ENCODE measurements at regions of chr12 and their contacts with region 1.

Region 1: GRCh38 chr12:6062757-6063735 is 61.4 kb downstream of the VWF start:
- DNase-seq: peak; percentile 59 to 77
- ATAC-seq: peak; percentile 71 to 90
- H3K4me3 ChIP-seq: no peak overlapping the region
- H3K27ac ChIP-seq: no peak overlapping the region
- H3K4me1 ChIP-seq: no peaks in the 10 kb centered on the region
- CTCF ChIP-seq: peak; percentile 84
- EP300 ChIP-seq: no peak
- POLR2A ChIP-seq: no peak
- RAD21 ChIP-seq: peak; percentile 91 to 96

Region 2: GRCh38 chr12:5047094-5047493 is 1016.0 kb before region 1 on chr12:
- CTCF ChIA-PET with region 1: no interaction called
- POLR2A ChIA-PET with region 1: no interaction called
- DNase-seq: no peak
- ATAC-seq: no peak
- H3K4me3 ChIP-seq: no peak overlapping the region
- H3K27ac ChIP-seq: no peak overlapping the region
- H3K4me1 ChIP-seq: no peaks in the 10 kb centered on the region
- CTCF ChIP-seq: no peak
- EP300 ChIP-seq: no peak
- POLR2A ChIP-seq: no peak
- RAD21 ChIP-seq: no peak

Region 3: GRCh38 chr12:6092784-6093722 is 30.0 kb after region 1 on chr12:
- CTCF ChIA-PET with region 1: interaction called, 11 read pairs
- POLR2A ChIA-PET with region 1: no interaction called
- DNase-seq: peak; percentile 85
- ATAC-seq: peak; percentile 96 to 97
- H3K4me3 ChIP-seq: peak overlapping the region; percentile 25; the same call in 2 of the 3 replicates
- H3K27ac ChIP-seq: peak overlapping the region; percentile 65 to 82
- H3K4me1 ChIP-seq: peaks cover 26% of the 10 kb centered on the region
- CTCF ChIP-seq: no peak
- EP300 ChIP-seq: no peak
- POLR2A ChIP-seq: 0 out of 2 replicates have a peak, but pooled peaks have one; percentile 16
- RAD21 ChIP-seq: no peak; a peak in 1 of 5 replicates

Region 4: GRCh38 chr12:6236641-6236940 is 173.5 kb after region 1 on chr12:
- CTCF ChIA-PET with region 1: no interaction called
- POLR2A ChIA-PET with region 1: no interaction called
- DNase-seq: no peak
- ATAC-seq: no peak
- H3K4me3 ChIP-seq: no peak overlapping the region
- H3K27ac ChIP-seq: no peak overlapping the region
- H3K4me1 ChIP-seq: no peaks in the 10 kb centered on the region
- CTCF ChIP-seq: no peak
- EP300 ChIP-seq: no peak
- POLR2A ChIP-seq: no peak
- RAD21 ChIP-seq: no peak